Esophagus muscularis mucosa (tissue), 4 donors: ENCODE measurements at regions of chr19 and their contacts with region 1.

Region 1: DNA sequence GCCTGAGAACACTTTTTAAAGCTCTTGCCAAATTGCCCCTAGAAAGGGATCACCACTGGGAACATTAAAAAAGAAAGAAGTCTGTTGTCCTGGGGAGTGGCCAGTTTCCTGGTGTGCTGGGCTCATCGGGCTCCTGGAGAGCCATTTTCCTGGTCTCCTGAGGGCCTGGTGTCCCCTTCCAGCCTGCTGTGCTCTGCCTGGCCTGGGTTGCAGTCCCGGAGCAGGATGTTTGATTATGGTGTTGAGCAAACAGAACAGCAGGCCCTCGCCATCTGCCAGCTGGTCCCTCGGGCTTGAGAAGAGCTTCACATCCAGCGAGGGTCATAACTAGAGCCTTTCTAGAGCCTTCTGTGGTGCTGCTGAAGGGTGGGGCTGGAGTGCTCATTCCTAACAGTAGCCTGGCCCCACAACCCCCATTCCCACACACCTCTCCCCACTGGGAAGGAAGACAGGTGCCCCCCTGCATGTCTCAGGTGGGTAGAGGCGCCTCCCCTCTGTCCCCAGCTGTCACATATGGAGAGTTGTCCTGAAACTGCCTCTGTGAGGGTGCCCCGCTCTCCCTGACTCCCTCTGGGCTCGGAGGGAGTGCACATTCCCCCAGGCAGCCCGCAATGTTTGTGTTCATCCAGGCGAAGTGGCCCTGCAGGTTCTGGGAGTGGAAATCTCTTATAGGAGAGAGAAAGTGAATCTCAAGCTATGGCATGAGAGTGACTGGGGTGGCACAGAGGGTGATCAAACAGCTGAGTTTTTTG is 151.1 kb downstream of the SIPA1L3 start:
- DNase-seq: no peak
- H3K4me3 ChIP-seq: no peak overlapping the region
- H3K27ac ChIP-seq: no peak overlapping the region
- H3K4me1 ChIP-seq: peaks cover 0 to 16% (median 8%) of the 10 kb centered on the region in 4 donors
- H3K27me3 ChIP-seq: no peaks in the 10 kb centered on the region
- CTCF ChIP-seq: no peak
- EP300 ChIP-seq: no peak
- POLR2A ChIP-seq: no peak

Region 2: GRCh38 chr19:37906869-37907734 is 151.0 kb before region 1 on chr19 and contains the start of gene SIPA1L3:
- intact Hi-C with region 1: loop called (anchors 10 kb)
- DNase-seq: peak; percentile 97
- H3K4me3 ChIP-seq: peak within 1 kb of the TSS; percentile 76 to 99 (median 91)
- H3K27ac ChIP-seq: peak within 1 kb of the TSS; percentile 70 to 81 (median 75)
- H3K4me1 ChIP-seq: peaks cover 12 to 23% (median 19%) of the 10 kb centered on the region in 4 donors
- H3K27me3 ChIP-seq: no peaks in the 10 kb centered on the region
- CTCF ChIP-seq: peak in 1 of 3 experiments; percentile 27
- EP300 ChIP-seq: no peak
- POLR2A ChIP-seq: peak; percentile 31
- total RNA-seq, gene SIPA1L3: 10.4 to 17.9 (median 13.2) TPM

Region 3: DNA sequence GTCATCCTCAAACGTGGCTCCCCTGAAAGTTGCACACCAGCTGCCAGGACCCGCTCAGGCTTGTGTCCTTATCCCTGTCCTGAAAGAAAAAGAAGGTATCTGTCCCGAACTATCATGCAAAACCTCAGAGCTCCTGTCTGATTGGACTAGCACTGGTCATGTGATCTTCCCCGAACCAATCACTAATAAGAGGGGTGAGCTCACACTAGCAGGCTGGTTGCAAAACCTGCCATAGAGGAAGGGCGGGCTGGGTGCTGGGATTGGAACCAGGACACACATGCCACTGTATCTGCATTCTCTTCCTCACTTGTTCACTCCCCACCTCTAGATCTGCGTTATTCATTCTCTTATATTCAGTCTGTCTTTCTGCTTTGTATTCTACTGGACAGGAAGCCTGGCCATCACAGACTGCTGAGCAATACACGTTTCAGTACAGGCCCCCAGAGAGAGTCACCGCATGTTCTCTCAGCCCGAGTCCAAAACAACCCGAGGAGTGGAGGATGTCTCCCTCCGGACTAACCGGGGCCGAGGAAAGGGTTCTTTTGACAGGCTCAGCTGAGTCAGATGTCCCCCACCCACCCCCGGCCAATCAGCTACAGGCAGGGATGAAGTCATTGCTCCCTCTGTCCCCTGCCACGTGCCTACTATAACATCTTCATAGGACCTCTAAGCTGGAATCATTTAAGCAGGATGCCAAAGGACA is 53.5 kb before region 1 on chr19:
- intact Hi-C with region 1: no loop called
- DNase-seq: peak; percentile 95
- H3K4me3 ChIP-seq: peak overlapping the region; percentile 42 to 53 (median 50)
- H3K27ac ChIP-seq: peak overlapping the region; percentile 70 to 78 (median 74)
- H3K4me1 ChIP-seq: peaks cover 19 to 33% (median 29%) of the 10 kb centered on the region in 4 donors
- H3K27me3 ChIP-seq: no peaks in the 10 kb centered on the region
- CTCF ChIP-seq: no peak
- EP300 ChIP-seq: no peak
- POLR2A ChIP-seq: peak; percentile 19